ENCODE measurements at regions of chr11 and their contacts with region 1.

Region 1: GRCh38 chr11:123166071-123166559 is 28.9 kb downstream of the CLMP start:
- DNase-seq: peak in 2 of 10 donors; percentile 13 to 33
- H3K4me3 ChIP-seq: no peak overlapping the region
- H3K27ac ChIP-seq: no peak overlapping the region
- H3K27me3 ChIP-seq: peaks cover 0 to 4% (median 0%) of the 10 kb centered on the region in 45 donors
- CTCF ChIP-seq: peak in 52 of 56 donors; percentile 18 to 66 (median 48)

Region 2: GRCh38 chr11:123246749-123247495 is 80.8 kb after region 1 on chr11:
- intact Hi-C with region 1: loop called in 1 of 2 experiments (anchors 5 kb)
- DNase-seq: peak; percentile 71 to 89 (median 80)
- H3K4me3 ChIP-seq: peak overlapping the region in 8 of 59 donors; percentile 1 to 40 (median 17)
- H3K27ac ChIP-seq: no peak overlapping the region
- H3K27me3 ChIP-seq: peaks cover 0 to 8% (median 0%) of the 10 kb centered on the region in 45 donors
- CTCF ChIP-seq: peak; percentile 79 to 100 (median 98)

Measured in dorsolateral prefrontal cortex (tissue), 120 donors.